PC-9 (cell line): ENCODE measurements at regions of chrX and their contacts with region 1.

Region 1: DNA sequence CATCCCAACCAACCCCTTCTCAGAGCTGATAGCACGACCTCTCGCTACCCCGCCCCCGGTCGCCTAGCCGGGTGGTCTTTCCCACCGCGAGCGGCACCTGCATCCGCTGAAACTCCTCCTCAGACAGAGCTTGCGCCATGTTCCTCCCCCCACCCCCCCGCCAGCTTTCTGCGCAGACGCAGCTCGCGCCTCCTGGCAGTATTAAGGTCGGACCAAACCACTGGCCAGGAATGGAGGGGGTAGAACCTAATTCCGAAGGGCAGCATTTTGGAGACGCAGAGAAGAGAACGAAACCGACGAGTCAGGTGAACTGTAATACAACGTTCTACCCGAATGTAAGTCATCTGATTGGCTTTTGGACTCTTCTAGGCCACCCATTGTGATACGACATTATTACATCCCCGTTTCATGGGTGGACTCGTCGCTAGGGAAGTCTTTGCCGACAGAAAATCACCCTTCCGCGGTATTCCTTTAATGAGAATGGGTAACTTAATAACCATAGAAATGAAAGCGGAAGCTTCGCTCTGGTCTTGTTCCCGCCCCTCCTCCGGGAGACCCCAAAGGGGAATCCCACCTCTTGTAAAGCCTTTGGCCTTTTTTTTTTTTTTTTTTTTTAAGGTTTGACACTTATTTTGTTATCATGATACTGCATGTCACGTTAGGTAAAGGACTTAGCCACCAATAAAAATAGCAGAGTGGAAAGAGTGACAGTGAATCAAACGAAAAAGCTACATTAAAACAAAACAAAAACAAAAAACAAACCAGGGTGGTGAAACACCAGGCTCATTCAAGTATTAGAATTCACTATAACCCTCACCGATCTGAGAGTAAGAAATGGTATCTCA is at the start of gene GRIPAP1:
- DNase-seq: peak; percentile 42 to 60
- H3K4me3 ChIP-seq: peak within 1 kb of the TSS; percentile 64
- H3K27ac ChIP-seq: peak within 1 kb of the TSS; percentile 92
- H3K4me1 ChIP-seq: no peaks in the 10 kb centered on the region
- H3K27me3 ChIP-seq: no peaks in the 10 kb centered on the region
- CTCF ChIP-seq: no peak
- total RNA-seq, gene GRIPAP1: 33.6 and 35.2 TPM in 2 replicates

Region 2: GRCh38 chrX:48649107-48649506 is 353.2 kb before region 1 on chrX:
- CTCF ChIA-PET with region 1: no interaction called
- POLR2A ChIA-PET with region 1: no interaction called
- intact Hi-C with region 1: no loop called
- DNase-seq: no peak
- H3K4me3 ChIP-seq: no peak overlapping the region
- H3K27ac ChIP-seq: no peak overlapping the region
- H3K4me1 ChIP-seq: no peaks in the 10 kb centered on the region
- H3K27me3 ChIP-seq: no peaks in the 10 kb centered on the region
- CTCF ChIP-seq: no peak

Region 3: DNA sequence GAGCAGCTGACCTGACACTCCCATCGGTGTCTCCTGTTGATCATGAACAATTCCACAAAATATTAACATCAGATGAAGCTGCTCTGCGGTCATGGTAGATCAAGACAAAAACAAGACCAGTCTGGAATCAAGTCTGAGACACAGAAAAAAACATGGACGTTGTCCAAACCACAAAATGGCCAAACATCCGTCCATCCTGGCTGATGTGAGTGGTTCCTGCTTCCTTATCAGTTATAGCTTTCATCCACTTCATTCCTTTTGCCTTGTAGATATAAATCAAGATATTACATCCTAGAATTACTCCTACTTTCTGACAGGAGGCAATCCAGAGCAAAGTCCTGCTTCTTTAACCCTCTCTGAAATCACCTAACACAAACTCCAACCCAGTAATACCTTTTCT is 138.1 kb before region 1 on chrX:
- CTCF ChIA-PET with region 1: no interaction called
- POLR2A ChIA-PET with region 1: no interaction called
- intact Hi-C with region 1: no loop called
- DNase-seq: peak; percentile 37 to 74
- H3K4me3 ChIP-seq: no peak overlapping the region
- H3K27ac ChIP-seq: peak overlapping the region; percentile 60
- H3K4me1 ChIP-seq: peaks cover 7% of the 10 kb centered on the region; the same call in 1 of the 2 replicates
- H3K27me3 ChIP-seq: no peaks in the 10 kb centered on the region
- CTCF ChIP-seq: no peak

Region 4: GRCh38 chrX:48911412-48912182 is 90.7 kb before region 1 on chrX and contains the start of gene SLC35A2:
- CTCF ChIA-PET with region 1: interaction called, 16 read pairs
- POLR2A ChIA-PET with region 1: no interaction called
- intact Hi-C with region 1: no loop called
- DNase-seq: peak; percentile 66 to 77
- H3K4me3 ChIP-seq: peak within 1 kb of the TSS; percentile 62
- H3K27ac ChIP-seq: peak within 1 kb of the TSS; percentile 68
- H3K4me1 ChIP-seq: no peaks in the 10 kb centered on the region
- H3K27me3 ChIP-seq: no peaks in the 10 kb centered on the region
- CTCF ChIP-seq: no peak
- total RNA-seq, gene SLC35A2: 24.1 and 29.6 TPM in 2 replicates

Region 5: GRCh38 chrX:48933757-48934156 is 68.6 kb before region 1 on chrX:
- CTCF ChIA-PET with region 1: no interaction called
- POLR2A ChIA-PET with region 1: interaction called, 29 read pairs
- intact Hi-C with region 1: no loop called
- DNase-seq: no peak
- H3K4me3 ChIP-seq: no peak overlapping the region
- H3K27ac ChIP-seq: no peak overlapping the region
- H3K4me1 ChIP-seq: no peaks in the 10 kb centered on the region
- H3K27me3 ChIP-seq: no peaks in the 10 kb centered on the region
- CTCF ChIP-seq: no peak

Region 6: GRCh38 chrX:49106930-49107329 is 104.6 kb after region 1 on chrX:
- CTCF ChIA-PET with region 1: no interaction called
- POLR2A ChIA-PET with region 1: no interaction called
- intact Hi-C with region 1: no loop called
- DNase-seq: no peak
- H3K4me3 ChIP-seq: no peak overlapping the region
- H3K27ac ChIP-seq: no peak overlapping the region
- H3K4me1 ChIP-seq: no peaks in the 10 kb centered on the region
- H3K27me3 ChIP-seq: no peaks in the 10 kb centered on the region
- CTCF ChIP-seq: no peak; the same call in 1 of the 2 replicates